Activated T-helper 1 cell treated with anti-CD3 and anti-CD28 coated beads, Interleukin-12 subunit alpha, Interleukin-12 subunit beta, Interleukin-2, Interleukin-4 antibody, amounts not matched to agents 30 ng/mL and 10 ng/mL and 1 ng/mL, durations not matched to agents 14 hours and 24 hours and 36 hours (primary cell): ENCODE measurements at regions of chr11 and their contacts with region 1.

Region 1: GRCh38 chr11:118752654-118753053 is 38.3 kb downstream of the DDX6 start:
- DNase-seq: no peak
- H3K4me3 Mint-ChIP-seq: no peak overlapping the region
- H3K27ac Mint-ChIP-seq: no peak overlapping the region
- H3K4me1 Mint-ChIP-seq: no peaks in the 10 kb centered on the region
- H3K27me3 Mint-ChIP-seq: no peaks in the 10 kb centered on the region

Region 2: GRCh38 chr11:118689851-118690552 is 62.7 kb before region 1 on chr11:
- intact Hi-C with region 1: loop called (anchors 2 kb)
- DNase-seq: peak; percentile 72
- H3K4me3 Mint-ChIP-seq: peak overlapping the region; percentile 60
- H3K27ac Mint-ChIP-seq: peak overlapping the region; percentile 52
- H3K4me1 Mint-ChIP-seq: peaks cover 36% of the 10 kb centered on the region
- H3K27me3 Mint-ChIP-seq: peaks cover 10% of the 10 kb centered on the region